WTC11 (cell line): ENCODE measurements at regions of chr3 and their contacts with region 1.

Region 1: GRCh38 chr3:87082796-87083440 is 92.0 kb upstream of the VGLL3 start:
- DNase-seq: no peak
- ATAC-seq: peak; percentile 95
- H3K4me3 Mint-ChIP-seq: no peak overlapping the region
- H3K27ac Mint-ChIP-seq: no peak overlapping the region; the same call in 1 of the 2 replicates
- H3K4me1 Mint-ChIP-seq: peaks cover 13% of the 10 kb centered on the region
- H3K27me3 Mint-ChIP-seq: no peaks in the 10 kb centered on the region; the same call in 1 of the 2 replicates
- CTCF ChIP-seq: 0 out of 2 replicates have a peak, but pooled peaks have one; percentile 21

Region 2: DNA sequence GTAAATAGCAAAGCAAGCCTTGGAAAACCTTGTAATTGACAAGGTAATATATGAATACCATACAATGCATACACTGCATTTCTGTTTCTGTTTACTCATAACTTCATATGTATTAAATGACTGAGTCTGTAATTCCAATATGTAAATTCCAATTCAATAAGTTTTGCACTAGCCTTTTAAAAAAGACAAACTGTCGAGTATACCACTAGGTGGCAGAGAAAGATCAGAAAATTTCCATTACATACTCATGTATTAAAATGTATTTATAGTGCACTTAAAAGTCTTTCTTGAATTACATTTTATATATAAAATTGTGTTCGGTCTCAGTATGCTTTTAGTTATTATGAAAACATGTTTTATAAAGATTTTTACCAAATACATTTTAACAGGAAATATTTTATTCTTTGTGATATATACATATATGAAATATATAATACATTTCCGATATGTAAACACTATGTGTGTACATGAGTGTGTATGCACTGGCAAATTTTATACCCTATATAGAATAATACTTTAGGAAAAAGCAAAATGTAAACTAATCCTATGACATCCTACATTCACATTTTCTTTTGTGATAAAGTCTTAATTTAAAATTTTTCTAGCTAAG is 308.7 kb before region 1 on chr3:
- CTCF ChIA-PET with region 1: interaction called, 35 read pairs
- POLR2A ChIA-PET with region 1: no interaction called
- DNase-seq: no peak
- ATAC-seq: no peak
- H3K4me3 Mint-ChIP-seq: no peak overlapping the region
- H3K27ac Mint-ChIP-seq: no peak overlapping the region
- H3K4me1 Mint-ChIP-seq: no peaks in the 10 kb centered on the region
- H3K27me3 Mint-ChIP-seq: no peaks in the 10 kb centered on the region
- CTCF ChIP-seq: peak; percentile 25; the same call in 1 of the 2 replicates

Region 3: DNA sequence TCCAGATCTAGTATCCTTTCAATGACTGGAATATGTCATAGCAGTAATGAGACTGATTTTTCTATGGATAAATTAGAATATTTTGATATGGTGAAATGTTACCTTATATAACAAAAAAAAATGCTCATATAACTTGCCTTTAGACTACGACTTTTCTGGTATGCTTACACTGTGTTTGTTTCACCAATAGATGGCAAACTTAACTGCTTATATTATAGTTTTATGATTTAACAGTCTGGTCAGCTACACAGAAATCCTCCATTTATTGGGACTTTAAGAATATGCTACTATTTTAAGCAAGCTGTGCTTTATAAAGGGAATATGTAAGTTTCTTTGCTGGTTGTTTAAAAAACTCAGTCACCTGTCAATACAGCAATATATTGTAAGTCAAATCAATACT is 297.5 kb before region 1 on chr3:
- CTCF ChIA-PET with region 1: no interaction called
- POLR2A ChIA-PET with region 1: no interaction called
- DNase-seq: no peak
- ATAC-seq: no peak
- H3K4me3 Mint-ChIP-seq: no peak overlapping the region
- H3K27ac Mint-ChIP-seq: no peak overlapping the region
- H3K4me1 Mint-ChIP-seq: no peaks in the 10 kb centered on the region
- H3K27me3 Mint-ChIP-seq: no peaks in the 10 kb centered on the region
- CTCF ChIP-seq: no peak

Region 4: DNA sequence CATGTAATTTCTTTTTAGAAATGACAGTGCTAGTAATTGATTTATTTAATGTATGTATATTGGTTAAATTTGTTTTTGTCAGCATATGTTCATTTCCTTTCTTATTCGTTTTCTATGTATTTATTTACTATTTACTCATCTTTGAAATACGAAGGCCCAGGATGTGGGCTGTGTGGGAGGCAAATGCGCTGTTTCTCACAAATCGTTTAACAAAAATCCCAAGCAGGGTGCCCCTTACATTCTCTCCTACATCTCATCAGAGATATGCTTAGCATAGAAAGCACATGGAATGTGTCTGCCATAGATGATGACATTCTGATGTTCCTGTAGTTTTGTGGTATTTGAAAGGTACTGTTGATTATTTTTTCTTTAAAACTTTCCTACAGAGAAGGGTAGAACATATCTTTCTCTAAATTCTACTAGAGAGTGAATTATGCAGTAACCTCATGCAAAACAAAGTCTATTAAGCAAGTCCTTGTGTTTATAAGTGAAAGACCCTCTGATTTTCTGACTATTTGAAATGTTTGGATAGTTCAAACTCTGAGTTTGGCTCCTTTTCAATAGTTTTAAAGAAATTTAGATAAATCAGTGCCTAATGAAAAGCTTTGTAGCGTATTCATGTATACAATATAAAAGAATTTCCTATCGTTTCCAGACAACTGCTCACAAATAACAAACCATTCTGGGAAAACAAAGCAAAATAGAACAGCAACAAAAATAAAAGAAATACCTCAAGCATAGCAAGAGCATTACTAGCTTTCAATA is 19.1 kb after region 1 on chr3:
- CTCF ChIA-PET with region 1: no interaction called
- POLR2A ChIA-PET with region 1: no interaction called
- DNase-seq: no peak
- ATAC-seq: peak; percentile 39; the same call in 1 of the 2 replicates
- H3K4me3 Mint-ChIP-seq: no peak overlapping the region
- H3K27ac Mint-ChIP-seq: no peak overlapping the region
- H3K4me1 Mint-ChIP-seq: peaks cover 15% of the 10 kb centered on the region
- H3K27me3 Mint-ChIP-seq: peaks cover 4% of the 10 kb centered on the region
- CTCF ChIP-seq: no peak

Region 5: GRCh38 chr3:87167628-87168456 is 84.9 kb after region 1 on chr3:
- CTCF ChIA-PET with region 1: interaction called, 10 read pairs
- POLR2A ChIA-PET with region 1: no interaction called
- DNase-seq: no peak
- ATAC-seq: peak; percentile 61
- H3K4me3 Mint-ChIP-seq: no peak overlapping the region
- H3K27ac Mint-ChIP-seq: no peak overlapping the region
- H3K4me1 Mint-ChIP-seq: peaks cover 4% of the 10 kb centered on the region
- H3K27me3 Mint-ChIP-seq: no peaks in the 10 kb centered on the region
- CTCF ChIP-seq: peak; percentile 51; the same call in 1 of the 2 replicates